ENCODE measurements at regions of chrX and their contacts with region 1.

Region 1: DNA sequence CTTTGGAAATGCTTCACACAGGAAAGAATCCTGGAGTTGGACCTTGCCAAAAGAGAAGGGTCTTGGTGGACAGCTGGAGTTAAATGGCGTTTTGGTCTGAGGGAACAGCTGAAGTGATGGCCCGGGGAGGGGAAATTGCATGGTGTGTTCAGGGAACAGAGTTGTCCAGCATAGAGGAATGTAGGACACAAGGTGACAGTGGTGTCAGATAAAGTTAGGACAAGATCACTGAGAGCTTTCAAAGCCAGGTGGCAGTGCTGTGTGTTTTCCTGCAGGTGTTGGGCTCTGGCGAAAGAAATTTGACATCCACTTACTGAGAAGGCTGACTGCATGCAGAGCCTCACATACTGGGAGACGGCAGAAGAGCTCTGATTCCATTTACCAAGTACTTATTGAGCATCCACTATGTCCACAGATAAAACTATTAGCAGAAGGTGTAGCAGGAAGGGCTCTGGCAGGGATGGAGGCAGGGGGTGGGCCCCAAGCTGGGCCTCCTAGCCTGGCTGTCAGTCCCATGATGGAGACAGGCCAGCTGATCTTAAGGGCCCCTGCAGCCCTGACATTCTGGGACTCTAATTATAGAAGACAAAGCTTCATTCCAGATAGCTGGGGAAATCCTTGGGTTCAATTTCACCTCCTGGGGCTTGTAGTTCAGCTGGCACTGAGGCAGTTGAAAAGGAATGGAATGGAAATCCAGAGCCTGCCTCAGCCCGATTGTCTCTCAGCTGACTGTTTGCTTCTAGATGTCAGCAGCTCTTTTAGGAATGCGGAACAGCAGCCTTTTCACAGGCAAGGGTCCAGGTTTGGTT is 150.2 kb upstream of the MAMLD1 start:
- DNase-seq: no peak
- H3K4me3 Mint-ChIP-seq: no peak overlapping the region
- H3K27ac Mint-ChIP-seq: no peak overlapping the region
- H3K4me1 Mint-ChIP-seq: no peaks in the 10 kb centered on the region
- H3K27me3 Mint-ChIP-seq: peaks cover 14% of the 10 kb centered on the region
- CTCF ChIP-seq: no peak

Region 2: GRCh38 chrX:149286940-149287349 is 925.9 kb before region 1 on chrX:
- CTCF ChIA-PET with region 1: no interaction called
- intact Hi-C with region 1: no loop called
- DNase-seq: peak; percentile 43
- H3K4me3 Mint-ChIP-seq: no peak overlapping the region
- H3K27ac Mint-ChIP-seq: no peak overlapping the region
- H3K4me1 Mint-ChIP-seq: no peaks in the 10 kb centered on the region
- H3K27me3 Mint-ChIP-seq: no peaks in the 10 kb centered on the region
- CTCF ChIP-seq: peak; percentile 43

Region 3: GRCh38 chrX:150486011-150486410 is 273.1 kb after region 1 on chrX:
- CTCF ChIA-PET with region 1: no interaction called
- intact Hi-C with region 1: loop called (anchors 5 kb)
- DNase-seq: peak; percentile 64
- H3K4me3 Mint-ChIP-seq: no peak overlapping the region
- H3K27ac Mint-ChIP-seq: no peak overlapping the region
- H3K4me1 Mint-ChIP-seq: peaks cover 13% of the 10 kb centered on the region
- H3K27me3 Mint-ChIP-seq: no peaks in the 10 kb centered on the region
- CTCF ChIP-seq: peak; percentile 50